CD4-positive, alpha-beta memory T cell (primary cell): ENCODE measurements at regions of chr2 and their contacts with region 1.

Region 1: DNA sequence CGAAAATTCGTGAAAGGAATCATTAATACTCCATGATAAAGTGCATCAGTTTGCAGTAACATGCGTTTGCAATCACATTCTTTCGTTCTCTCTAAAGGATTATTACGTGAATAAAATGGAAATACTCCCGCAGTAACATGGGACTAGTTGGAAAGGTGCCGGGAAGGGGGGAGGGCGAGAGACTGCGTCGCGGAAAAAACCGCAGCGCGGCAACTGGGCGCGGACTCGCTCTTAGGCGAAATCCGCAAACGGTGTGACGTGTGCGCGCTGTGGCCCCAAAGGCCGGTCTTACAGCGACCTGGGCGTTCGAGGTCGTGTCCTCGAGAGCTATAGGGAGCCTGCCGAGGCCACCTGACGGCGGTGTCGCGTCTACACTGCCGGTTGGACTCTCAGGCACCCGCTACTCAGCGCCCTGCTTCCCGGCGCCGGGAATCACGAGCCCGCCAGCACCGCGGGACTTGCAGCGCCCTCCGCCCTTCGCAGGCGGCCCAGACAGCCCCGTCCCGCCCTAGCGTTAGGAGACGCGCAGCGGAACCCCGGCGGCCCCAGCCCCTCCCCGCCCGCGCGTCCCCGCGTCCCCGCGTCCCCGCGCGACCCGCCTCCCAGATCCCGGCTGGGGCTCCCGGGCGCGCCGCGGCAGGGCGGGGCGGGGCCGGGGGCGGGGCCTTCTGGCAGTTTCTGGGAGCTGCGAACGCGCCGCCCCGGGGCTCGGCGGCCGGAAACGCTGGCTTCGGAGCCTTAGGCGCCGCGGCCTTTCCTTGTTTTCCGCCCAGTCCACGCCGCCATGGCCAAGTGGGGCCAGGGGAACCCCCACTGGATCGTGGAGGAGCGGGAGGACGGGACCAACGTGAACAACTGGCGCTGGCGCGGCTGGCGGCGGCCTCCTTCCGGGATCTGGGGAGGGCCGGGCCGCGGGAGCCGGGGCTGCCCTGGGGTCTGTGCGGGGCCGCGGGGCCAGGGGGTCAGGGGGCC is 15.1 kb downstream of the C2orf74 start:
- DNase-seq: peak; percentile 89 to 94 (median 93)
- H3K4me3 ChIP-seq: peak overlapping the region; percentile 74 to 100
- H3K4me3 Mint-ChIP-seq: peak overlapping the region; percentile 91 to 95 (median 93)
- H3K27ac ChIP-seq: peak overlapping the region; percentile 93
- H3K27ac Mint-ChIP-seq: peak overlapping the region; percentile 88 to 96 (median 94)
- H3K4me1 ChIP-seq: peaks cover 47% of the 10 kb centered on the region
- H3K4me1 Mint-ChIP-seq: peaks cover 39 to 56% (median 45%) of the 10 kb centered on the region in 4 donors
- H3K27me3 ChIP-seq: no peaks in the 10 kb centered on the region
- H3K27me3 Mint-ChIP-seq: no peaks in the 10 kb centered on the region

Region 2: DNA sequence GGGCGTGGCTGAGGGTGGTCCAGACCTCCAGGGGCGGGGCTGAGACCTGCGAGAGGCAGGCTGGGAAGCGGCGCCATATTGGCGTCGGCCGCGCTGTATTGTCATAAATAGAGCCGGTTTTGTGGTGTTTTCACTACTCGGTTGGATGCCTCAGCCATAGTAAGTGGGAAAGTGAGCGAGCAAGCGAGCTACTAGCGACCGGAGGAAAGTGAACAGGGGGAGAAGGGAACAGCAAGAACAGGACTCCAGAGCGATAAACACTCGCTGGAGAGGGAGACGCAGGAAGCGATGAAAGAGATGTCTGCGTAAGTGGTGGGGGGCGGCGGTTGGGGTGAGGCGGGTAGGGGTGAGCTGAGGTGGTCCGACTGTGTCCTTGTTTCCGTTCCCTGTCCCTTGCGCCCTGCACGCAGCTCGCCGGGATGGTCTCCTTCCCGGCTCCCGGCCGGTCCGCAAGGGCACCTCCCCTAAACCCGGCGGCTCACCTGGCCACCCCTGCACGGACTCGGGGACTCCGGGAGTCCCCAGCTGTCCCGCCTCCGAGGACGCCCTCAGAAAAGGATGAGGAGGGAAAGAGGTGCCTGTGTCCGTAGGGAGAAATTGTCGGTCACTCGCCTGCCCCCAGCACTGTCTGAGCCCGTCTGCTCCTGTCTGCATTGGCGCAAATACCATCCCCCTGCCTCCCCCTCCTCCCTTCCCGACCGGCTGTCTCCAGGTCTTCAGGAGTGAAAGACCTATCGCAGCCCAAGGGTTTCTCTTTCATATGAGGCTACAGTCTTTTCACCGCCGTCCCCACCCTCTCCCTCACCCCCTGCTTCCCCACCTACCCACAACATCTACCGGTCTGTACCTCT is 420.6 kb before region 1 on chr2 and contains the start of gene PAPOLG:
- CTCF ChIA-PET with region 1: no interaction called
- POLR2A ChIA-PET with region 1: interaction called, 4 read pairs
- intact Hi-C with region 1: loop called (anchors 5 kb)
- DNase-seq: peak; percentile 92 to 96 (median 93)
- H3K4me3 ChIP-seq: peak within 1 kb of the TSS; percentile 76 to 92
- H3K4me3 Mint-ChIP-seq: peak within 1 kb of the TSS; percentile 98 to 100 (median 100)
- H3K27ac ChIP-seq: peak within 1 kb of the TSS; percentile 89
- H3K27ac Mint-ChIP-seq: peak within 1 kb of the TSS; percentile 84 to 100 (median 99)
- H3K4me1 ChIP-seq: peaks cover 36% of the 10 kb centered on the region
- H3K4me1 Mint-ChIP-seq: peaks cover 28 to 51% (median 40%) of the 10 kb centered on the region in 4 donors
- H3K27me3 ChIP-seq: no peaks in the 10 kb centered on the region
- H3K27me3 Mint-ChIP-seq: no peaks in the 10 kb centered on the region
- total RNA-seq, gene PAPOLG: 40.1 to 40.3 TPM

Region 3: DNA sequence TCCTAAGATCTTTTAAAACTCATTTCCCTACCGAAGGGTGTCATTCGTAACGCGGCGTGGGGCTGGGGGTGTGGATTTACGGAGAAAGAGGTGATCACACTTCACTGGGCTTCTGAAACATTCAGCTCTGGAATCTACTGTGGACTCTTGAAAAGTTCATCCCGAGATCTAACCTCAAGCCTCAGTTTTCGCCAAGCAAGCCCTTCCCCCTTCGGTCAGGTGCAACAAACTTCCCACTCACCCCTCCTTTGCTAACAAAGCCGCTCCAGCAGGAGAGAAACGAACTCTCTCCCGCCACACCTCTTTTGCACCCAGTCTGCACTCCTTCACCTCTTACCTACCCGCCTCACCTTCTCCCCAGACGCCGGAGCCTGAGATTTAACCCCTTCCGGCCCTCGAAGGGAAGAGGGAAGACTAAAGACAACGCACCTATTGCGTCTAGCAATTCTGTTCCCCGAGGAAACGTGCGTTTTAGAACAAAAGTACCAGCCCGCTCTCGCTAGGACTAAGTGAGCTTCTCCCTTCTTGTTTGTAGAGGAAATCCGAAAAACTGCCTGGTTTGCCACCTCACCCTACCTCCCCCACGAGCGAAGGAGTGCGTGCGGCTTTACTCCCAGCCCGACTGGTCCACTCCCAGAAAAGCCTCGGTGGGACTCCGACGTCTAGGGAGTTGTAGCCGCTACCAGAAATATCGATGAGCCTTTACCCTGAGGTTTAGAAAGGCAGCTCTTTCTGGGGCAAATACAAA is 160.1 kb before region 1 on chr2:
- CTCF ChIA-PET with region 1: interaction called, 5 read pairs
- POLR2A ChIA-PET with region 1: interaction called, 32 read pairs
- intact Hi-C with region 1: loop called (anchors 1 kb)
- DNase-seq: peak; percentile 73 to 82 (median 76)
- H3K4me3 ChIP-seq: peak overlapping the region; percentile 91 to 99
- H3K4me3 Mint-ChIP-seq: peak overlapping the region; percentile 98 to 100 (median 99)
- H3K27ac ChIP-seq: peak overlapping the region; percentile 80
- H3K27ac Mint-ChIP-seq: peak overlapping the region; percentile 92 to 98 (median 97)
- H3K4me1 ChIP-seq: peaks cover 25% of the 10 kb centered on the region
- H3K4me1 Mint-ChIP-seq: peaks cover 13 to 52% (median 36%) of the 10 kb centered on the region in 4 donors
- H3K27me3 ChIP-seq: no peaks in the 10 kb centered on the region
- H3K27me3 Mint-ChIP-seq: no peaks in the 10 kb centered on the region

Region 4: GRCh38 chr2:61117534-61117933 is 59.5 kb before region 1 on chr2:
- CTCF ChIA-PET with region 1: no interaction called
- POLR2A ChIA-PET with region 1: no interaction called
- intact Hi-C with region 1: no loop called
- DNase-seq: no peak
- H3K4me3 ChIP-seq: no peak overlapping the region
- H3K4me3 Mint-ChIP-seq: no peak overlapping the region
- H3K27ac ChIP-seq: no peak overlapping the region
- H3K27ac Mint-ChIP-seq: no peak overlapping the region
- H3K4me1 ChIP-seq: no peaks in the 10 kb centered on the region
- H3K4me1 Mint-ChIP-seq: no peaks in the 10 kb centered on the region
- H3K27me3 ChIP-seq: no peaks in the 10 kb centered on the region
- H3K27me3 Mint-ChIP-seq: no peaks in the 10 kb centered on the region

Region 5: GRCh38 chr2:61144697-61145268 is 32.3 kb before region 1 on chr2:
- CTCF ChIA-PET with region 1: interaction called, 5 read pairs
- POLR2A ChIA-PET with region 1: interaction called, 67 read pairs
- intact Hi-C with region 1: loop called (anchors 1 kb)
- DNase-seq: peak; percentile 88 to 90 (median 90)
- H3K4me3 ChIP-seq: peak overlapping the region; percentile 85 to 90
- H3K4me3 Mint-ChIP-seq: peak overlapping the region; percentile 91 to 97 (median 95)
- H3K27ac ChIP-seq: peak overlapping the region; percentile 55
- H3K27ac Mint-ChIP-seq: peak overlapping the region; percentile 86 to 98 (median 97)
- H3K4me1 ChIP-seq: peaks cover 10% of the 10 kb centered on the region
- H3K4me1 Mint-ChIP-seq: peaks cover 6 to 11% (median 9%) of the 10 kb centered on the region in 4 donors
- H3K27me3 ChIP-seq: no peaks in the 10 kb centered on the region
- H3K27me3 Mint-ChIP-seq: no peaks in the 10 kb centered on the region

Region 6: GRCh38 chr2:61193670-61194571 is 16.9 kb after region 1 on chr2:
- CTCF ChIA-PET with region 1: interaction called, 6 read pairs
- POLR2A ChIA-PET with region 1: interaction called, 30 read pairs
- intact Hi-C with region 1: no loop called
- DNase-seq: peak in 1 of 5 donors; percentile 11
- H3K4me3 ChIP-seq: no peak overlapping the region
- H3K4me3 Mint-ChIP-seq: peak overlapping the region in 1 of 8 donors; percentile 34
- H3K27ac ChIP-seq: peak overlapping the region; percentile 19
- H3K27ac Mint-ChIP-seq: peak overlapping the region in 6 of 7 donors; percentile 33 to 85 (median 73)
- H3K4me1 ChIP-seq: peaks cover 12% of the 10 kb centered on the region
- H3K4me1 Mint-ChIP-seq: peaks cover 15 to 26% (median 15%) of the 10 kb centered on the region in 4 donors
- H3K27me3 ChIP-seq: no peaks in the 10 kb centered on the region
- H3K27me3 Mint-ChIP-seq: no peaks in the 10 kb centered on the region

Region 7: DNA sequence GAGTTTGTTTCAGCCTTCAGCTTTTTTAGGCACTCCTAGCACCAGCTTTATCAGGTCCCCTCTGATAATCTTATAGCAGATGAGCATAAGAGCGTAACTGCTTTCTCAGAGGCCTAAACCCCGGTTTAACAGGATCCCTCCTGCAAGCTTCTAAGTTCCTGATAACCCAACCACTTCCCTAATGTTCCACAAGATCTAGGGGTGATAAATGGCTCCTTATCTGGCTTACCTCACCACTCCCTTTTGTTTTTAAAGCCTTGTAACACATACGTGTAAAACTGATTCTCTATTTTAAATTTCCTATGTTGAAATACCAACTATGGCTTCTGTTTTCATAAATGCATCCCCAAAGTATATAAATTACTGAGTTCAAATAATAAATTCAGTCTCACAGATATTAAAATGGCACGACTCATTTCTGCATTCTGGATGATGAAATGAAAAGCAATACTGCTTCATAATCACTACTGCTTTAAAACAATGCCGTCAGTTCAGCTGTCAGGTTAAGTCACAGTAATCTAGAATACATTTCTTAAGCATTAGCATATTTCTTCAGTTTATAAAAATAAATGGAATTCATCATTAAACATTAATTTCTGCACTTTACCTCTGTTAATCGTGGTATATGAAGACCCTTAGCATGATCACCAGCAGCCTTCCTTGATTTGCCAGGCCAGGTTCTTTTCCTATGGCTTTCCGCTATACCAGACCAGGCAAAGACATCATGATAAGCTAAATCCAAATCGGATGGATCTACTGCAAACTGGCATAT is 111.2 kb after region 1 on chr2:
- CTCF ChIA-PET with region 1: no interaction called
- POLR2A ChIA-PET with region 1: no interaction called
- intact Hi-C with region 1: no loop called
- DNase-seq: no peak
- H3K4me3 ChIP-seq: no peak overlapping the region
- H3K4me3 Mint-ChIP-seq: no peak overlapping the region
- H3K27ac ChIP-seq: no peak overlapping the region
- H3K27ac Mint-ChIP-seq: peak overlapping the region in 2 of 7 donors; percentile 39 to 55
- H3K4me1 ChIP-seq: no peaks in the 10 kb centered on the region
- H3K4me1 Mint-ChIP-seq: peaks cover 4 to 14% (median 7%) of the 10 kb centered on the region in 4 donors
- H3K27me3 ChIP-seq: no peaks in the 10 kb centered on the region
- H3K27me3 Mint-ChIP-seq: no peaks in the 10 kb centered on the region

Region 8: DNA sequence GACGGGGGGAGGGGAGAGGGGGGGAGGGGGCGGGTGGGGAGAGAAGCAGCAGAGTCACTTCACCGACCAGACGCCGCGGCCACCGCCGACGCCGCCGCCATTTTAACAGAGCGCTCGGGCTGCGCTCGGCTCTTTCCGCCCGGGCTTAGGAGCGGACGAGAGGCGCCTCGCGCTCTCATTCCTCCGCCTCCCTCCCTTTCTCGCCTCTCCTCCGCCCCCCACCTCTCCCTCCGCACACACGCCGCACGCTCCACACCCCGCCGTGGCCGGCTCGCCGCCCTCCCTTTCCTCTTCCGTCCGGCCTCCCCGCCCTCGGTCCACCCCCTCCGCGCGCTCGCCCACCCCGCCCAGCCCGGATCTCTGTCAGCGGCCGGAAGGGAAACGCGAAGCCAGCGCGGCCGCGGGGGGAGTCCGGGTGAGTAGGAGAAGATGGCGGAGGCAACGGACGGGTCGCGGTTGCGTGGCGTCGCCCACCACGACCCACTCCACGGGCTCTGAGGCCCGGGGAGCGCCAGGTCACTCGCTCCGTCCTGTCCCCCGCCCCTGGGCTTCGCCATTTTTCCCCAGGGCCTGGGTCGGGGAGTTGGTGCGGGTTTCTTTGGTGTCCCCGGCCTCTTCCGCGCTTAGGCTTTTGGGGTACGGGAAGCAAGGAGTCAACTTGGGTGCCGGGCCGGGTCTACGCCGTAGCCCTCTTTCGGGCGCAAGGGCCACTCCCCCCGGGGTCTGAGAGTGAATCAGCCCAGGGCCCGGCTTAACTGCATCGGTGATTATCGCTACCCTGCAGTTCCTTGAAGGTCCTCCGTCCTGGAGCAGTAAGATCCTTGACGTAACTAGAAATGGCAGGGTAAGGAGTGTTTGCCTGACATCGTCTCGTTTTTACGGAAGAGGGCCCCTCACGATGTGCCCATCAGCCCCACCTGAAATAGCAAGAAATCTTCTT is 294.2 kb after region 1 on chr2 and contains the start of gene USP34:
- CTCF ChIA-PET with region 1: no interaction called
- POLR2A ChIA-PET with region 1: no interaction called
- intact Hi-C with region 1: loop called (anchors 2 kb)
- DNase-seq: peak; percentile 89 to 95 (median 92)
- H3K4me3 ChIP-seq: peak within 1 kb of the TSS; percentile 68 to 89
- H3K4me3 Mint-ChIP-seq: peak within 1 kb of the TSS; percentile 92 to 98 (median 95)
- H3K27ac ChIP-seq: peak within 1 kb of the TSS; percentile 98
- H3K27ac Mint-ChIP-seq: peak within 1 kb of the TSS; percentile 93 to 100 (median 99)
- H3K4me1 ChIP-seq: peaks cover 41% of the 10 kb centered on the region
- H3K4me1 Mint-ChIP-seq: peaks cover 12 to 46% (median 29%) of the 10 kb centered on the region in 4 donors
- H3K27me3 ChIP-seq: no peaks in the 10 kb centered on the region
- H3K27me3 Mint-ChIP-seq: no peaks in the 10 kb centered on the region
- total RNA-seq, gene USP34: 163 to 164 TPM

Region 9: DNA sequence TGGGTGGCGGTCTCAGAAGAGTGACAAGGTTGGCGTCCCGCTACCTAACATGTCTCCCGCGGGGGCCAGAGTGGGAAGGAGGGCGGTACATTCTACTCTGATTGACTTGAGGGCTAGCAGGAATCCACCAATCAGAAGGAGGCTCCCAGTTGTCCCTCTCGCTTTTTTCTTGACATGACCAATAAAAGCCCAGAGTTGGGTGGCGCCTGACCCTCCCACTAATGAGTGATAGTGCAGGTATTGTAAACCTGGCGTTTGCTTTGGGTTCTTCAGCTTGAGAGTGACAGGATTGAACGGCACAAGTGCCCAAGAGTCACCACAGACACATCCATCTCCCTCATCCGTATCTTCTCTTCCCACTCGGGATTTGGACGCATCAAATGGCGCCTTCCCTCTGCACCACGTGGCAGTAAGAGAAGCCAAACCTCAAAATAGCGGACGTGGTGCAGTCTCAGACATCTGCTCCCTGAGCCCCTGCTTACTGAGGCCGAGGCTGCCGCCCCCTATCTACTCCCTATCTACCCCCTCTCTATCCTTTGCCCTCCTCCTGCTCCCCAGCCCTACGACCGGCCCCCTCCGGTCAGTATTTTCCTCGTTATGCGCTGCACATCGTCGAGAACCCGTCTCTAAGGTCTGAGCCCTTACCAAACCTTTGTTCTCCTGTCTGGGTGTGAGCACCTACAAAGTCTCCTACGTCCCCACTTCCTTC is 677.6 kb after region 1 on chr2:
- CTCF ChIA-PET with region 1: no interaction called
- POLR2A ChIA-PET with region 1: no interaction called
- intact Hi-C with region 1: loop called (anchors 2 kb)
- DNase-seq: peak; percentile 92 to 98 (median 94)
- H3K4me3 ChIP-seq: peak overlapping the region; percentile 85 to 95
- H3K4me3 Mint-ChIP-seq: peak overlapping the region; percentile 94 to 99 (median 96)
- H3K27ac ChIP-seq: peak overlapping the region; percentile 69
- H3K27ac Mint-ChIP-seq: peak overlapping the region; percentile 87 to 98 (median 95)
- H3K4me1 ChIP-seq: peaks cover 16% of the 10 kb centered on the region
- H3K4me1 Mint-ChIP-seq: peaks cover 7 to 25% (median 16%) of the 10 kb centered on the region in 4 donors
- H3K27me3 ChIP-seq: no peaks in the 10 kb centered on the region
- H3K27me3 Mint-ChIP-seq: no peaks in the 10 kb centered on the region